ENCODE measurements at regions of chr2 and their contacts with region 1.

Region 1: DNA sequence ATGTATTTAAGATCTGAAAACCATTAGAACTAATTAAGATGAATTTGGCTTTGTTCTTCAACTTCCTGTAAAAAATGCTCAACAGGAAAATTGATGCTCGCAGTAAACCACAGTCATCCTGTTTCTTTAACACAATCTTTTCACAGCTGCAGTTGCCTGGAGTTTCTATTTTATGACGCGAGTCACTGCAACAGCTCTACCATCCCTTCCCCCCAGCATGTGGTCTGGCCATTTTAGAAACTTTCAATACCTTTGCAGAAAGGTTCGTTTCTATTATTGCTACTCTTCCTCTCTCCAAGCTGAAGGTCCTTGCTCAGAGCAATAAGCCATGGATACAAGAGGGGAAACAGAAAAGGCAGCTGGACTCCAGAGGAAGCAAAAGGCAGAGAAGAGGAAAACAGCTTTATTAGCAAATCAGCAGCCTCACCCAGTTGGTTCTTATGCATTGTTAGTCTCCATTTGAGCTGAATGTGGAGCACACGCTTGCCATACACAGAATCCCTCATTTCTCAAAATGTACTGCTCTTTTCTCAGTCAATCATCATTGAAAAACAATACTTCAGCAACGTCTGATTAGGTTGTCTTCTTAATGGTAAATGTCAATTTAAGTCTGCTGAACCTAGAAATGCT is 3.9 kb downstream of the WIPF1 start:
- DNase-seq: peak; percentile 34 to 95 (median 71)
- ATAC-seq: peak; percentile 67
- H3K4me3 ChIP-seq: peak overlapping the region; percentile 40 to 74
- H3K4me3 Mint-ChIP-seq: peak overlapping the region; percentile 87
- H3K27ac ChIP-seq: peak overlapping the region; percentile 65 to 91
- H3K27ac Mint-ChIP-seq: peak overlapping the region; percentile 99
- H3K4me1 ChIP-seq: peaks cover 46% of the 10 kb centered on the region
- H3K4me1 Mint-ChIP-seq: peaks cover 61% of the 10 kb centered on the region
- H3K27me3 ChIP-seq: no peaks in the 10 kb centered on the region
- H3K27me3 Mint-ChIP-seq: no peaks in the 10 kb centered on the region
- CTCF ChIP-seq: no peak

Region 2: DNA sequence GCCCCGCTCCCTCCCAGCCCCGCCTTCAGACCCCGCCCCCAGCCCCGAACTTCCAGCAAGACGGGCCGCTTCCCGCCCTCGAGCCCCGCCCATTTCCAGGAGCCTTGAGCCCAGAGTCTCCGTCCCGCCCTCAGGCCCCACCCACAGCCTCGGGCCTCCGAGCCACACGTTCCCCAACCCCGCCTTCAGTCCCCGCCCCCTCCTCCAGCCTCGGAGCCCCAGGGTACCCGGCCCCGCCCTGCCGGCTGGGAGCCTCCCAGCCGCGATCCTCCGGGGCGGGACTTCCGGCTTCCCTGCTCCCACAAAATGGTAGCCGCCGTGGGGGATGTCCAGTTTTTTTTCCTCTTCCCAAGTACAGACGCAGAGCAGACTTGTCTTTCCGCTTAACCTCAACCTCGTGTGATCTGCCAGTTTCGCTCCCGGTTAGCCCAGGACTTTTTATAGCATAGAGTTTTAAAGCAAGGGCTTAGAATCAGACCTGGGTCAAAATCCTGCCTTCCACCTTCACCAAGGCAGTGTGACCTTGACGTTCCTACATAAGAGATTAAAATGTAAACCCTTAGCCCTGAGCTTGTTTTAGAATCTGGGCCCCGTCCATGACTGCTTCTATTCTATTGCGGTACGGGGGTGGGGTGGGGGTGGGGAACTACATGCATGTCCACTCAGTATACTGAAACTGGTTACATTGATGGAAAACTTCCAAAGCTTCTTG is 106.4 kb before region 1 on chr2:
- CTCF ChIA-PET with region 1: interaction called, 9 read pairs
- POLR2A ChIA-PET with region 1: interaction called, 13 read pairs
- intact Hi-C with region 1: loop called (anchors 2 to 5 kb)
- DNase-seq: peak; percentile 77 to 98 (median 97)
- ATAC-seq: peak; percentile 74
- H3K4me3 ChIP-seq: peak overlapping the region; percentile 83 to 86
- H3K4me3 Mint-ChIP-seq: peak overlapping the region; percentile 97
- H3K27ac ChIP-seq: peak overlapping the region; percentile 69 to 85
- H3K27ac Mint-ChIP-seq: peak overlapping the region; percentile 88
- H3K4me1 ChIP-seq: peaks cover 59% of the 10 kb centered on the region
- H3K4me1 Mint-ChIP-seq: peaks cover 73% of the 10 kb centered on the region
- H3K27me3 ChIP-seq: no peaks in the 10 kb centered on the region
- H3K27me3 Mint-ChIP-seq: no peaks in the 10 kb centered on the region
- CTCF ChIP-seq: no peak

Region 3: GRCh38 chr2:174492963-174493431 is 100.7 kb before region 1 on chr2:
- CTCF ChIA-PET with region 1: interaction called, 9 read pairs
- POLR2A ChIA-PET with region 1: interaction called, 13 read pairs
- intact Hi-C with region 1: loop called in 1 of 2 experiments (anchors 5 kb)
- DNase-seq: peak; percentile 34 to 94 (median 64)
- ATAC-seq: peak; percentile 85
- H3K4me3 ChIP-seq: peak overlapping the region; percentile 27 to 47
- H3K4me3 Mint-ChIP-seq: peak overlapping the region; percentile 85
- H3K27ac ChIP-seq: peak overlapping the region; percentile 71 to 88
- H3K27ac Mint-ChIP-seq: peak overlapping the region; percentile 97
- H3K4me1 ChIP-seq: peaks cover 71% of the 10 kb centered on the region
- H3K4me1 Mint-ChIP-seq: peaks cover 83% of the 10 kb centered on the region
- H3K27me3 ChIP-seq: no peaks in the 10 kb centered on the region
- H3K27me3 Mint-ChIP-seq: no peaks in the 10 kb centered on the region
- CTCF ChIP-seq: no peak

Region 4: GRCh38 chr2:174546581-174547506 is 46.8 kb before region 1 on chr2:
- CTCF ChIA-PET with region 1: no interaction called
- POLR2A ChIA-PET with region 1: no interaction called
- intact Hi-C with region 1: no loop called
- DNase-seq: peak in 5 of 9 experiments; percentile 8 to 66 (median 46)
- ATAC-seq: peak; percentile 83
- H3K4me3 ChIP-seq: no peak overlapping the region
- H3K4me3 Mint-ChIP-seq: no peak overlapping the region
- H3K27ac ChIP-seq: no peak overlapping the region
- H3K27ac Mint-ChIP-seq: peak overlapping the region; percentile 73
- H3K4me1 ChIP-seq: peaks cover 4% of the 10 kb centered on the region
- H3K4me1 Mint-ChIP-seq: peaks cover 23% of the 10 kb centered on the region
- H3K27me3 ChIP-seq: no peaks in the 10 kb centered on the region
- H3K27me3 Mint-ChIP-seq: no peaks in the 10 kb centered on the region
- CTCF ChIP-seq: no peak

Region 5: DNA sequence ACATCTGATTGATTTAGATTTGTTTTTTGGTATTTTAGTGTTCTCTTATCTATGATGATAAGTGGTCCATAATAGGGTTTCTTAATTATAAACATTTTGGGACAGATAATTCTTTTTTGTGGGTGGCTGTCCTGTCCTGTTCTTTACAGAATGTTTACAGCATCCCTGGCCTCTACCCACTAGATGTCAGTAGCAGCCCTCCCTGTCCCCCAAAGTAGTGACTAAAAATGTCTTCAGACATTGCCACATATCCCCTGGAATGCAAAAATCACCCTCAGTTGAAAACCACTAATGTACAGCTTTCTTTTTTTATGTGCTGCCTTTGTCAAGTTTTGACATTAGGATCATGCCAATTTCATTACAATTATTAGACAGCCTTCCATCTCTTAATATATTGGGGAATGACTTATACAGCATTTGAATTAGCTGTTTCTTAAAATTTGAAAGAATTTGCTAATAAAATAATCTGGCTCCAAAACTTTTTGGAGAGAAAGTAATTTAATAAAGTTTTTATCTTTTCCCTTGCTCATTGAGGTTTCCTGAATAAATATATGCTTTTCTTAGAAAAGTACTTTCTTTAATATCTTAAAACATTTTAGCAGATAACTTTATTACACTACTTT is 15.6 kb before region 1 on chr2:
- CTCF ChIA-PET with region 1: interaction called, 289 read pairs
- POLR2A ChIA-PET with region 1: interaction called, 18 read pairs
- intact Hi-C with region 1: loop called in 1 of 2 experiments (anchors 1 kb)
- DNase-seq: peak in 6 of 9 experiments; percentile 33 to 87 (median 67)
- ATAC-seq: peak; percentile 84
- H3K4me3 ChIP-seq: no peak overlapping the region
- H3K4me3 Mint-ChIP-seq: no peak overlapping the region
- H3K27ac ChIP-seq: peak overlapping the region in 1 of 2 experiments; percentile 5
- H3K27ac Mint-ChIP-seq: peak overlapping the region; percentile 83
- H3K4me1 ChIP-seq: peaks cover 65% of the 10 kb centered on the region
- H3K4me1 Mint-ChIP-seq: peaks cover 80% of the 10 kb centered on the region
- H3K27me3 ChIP-seq: no peaks in the 10 kb centered on the region
- H3K27me3 Mint-ChIP-seq: no peaks in the 10 kb centered on the region
- CTCF ChIP-seq: peak; percentile 83

Region 6: DNA sequence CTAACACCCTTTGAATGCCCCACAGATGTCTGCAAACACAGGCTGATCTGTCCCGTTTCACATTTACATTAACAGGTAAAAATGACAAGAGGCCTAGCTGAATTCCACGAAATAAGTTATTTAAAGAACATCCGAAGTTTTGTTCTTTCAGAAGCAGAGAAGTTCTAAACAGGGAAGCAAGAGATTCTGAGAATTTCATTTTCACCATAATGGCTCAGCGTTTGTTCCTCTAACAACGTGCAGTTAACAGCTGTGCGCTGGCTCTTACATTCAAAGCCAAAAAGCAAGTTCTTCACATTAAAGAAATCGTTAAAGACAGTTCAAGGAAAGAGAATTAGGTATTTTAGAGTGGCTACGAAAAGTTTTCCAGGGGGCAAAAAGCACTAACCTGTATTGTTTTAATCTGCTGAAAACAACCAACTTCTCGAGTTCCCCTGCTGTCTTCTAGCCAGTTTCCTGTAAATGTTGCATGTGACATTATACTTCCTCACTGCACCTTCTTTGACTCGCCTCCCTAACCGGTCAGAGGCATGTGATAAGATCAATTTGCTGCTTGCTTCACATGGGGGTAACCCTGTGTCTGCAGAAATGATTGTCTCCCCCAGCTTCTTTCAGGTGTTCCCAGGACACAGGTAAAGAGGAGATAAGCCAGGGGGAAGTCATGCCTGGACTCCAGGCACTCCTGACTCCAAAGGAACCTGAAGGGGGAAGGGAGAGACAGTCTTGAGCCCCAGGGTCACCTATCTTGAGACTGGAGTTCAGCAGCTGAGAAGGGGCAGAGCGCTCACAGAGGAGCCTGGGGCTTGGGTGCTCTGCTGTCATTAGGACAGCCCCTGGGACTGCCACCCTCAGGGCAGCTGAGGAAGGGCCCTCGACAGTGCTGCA is 40.7 kb after region 1 on chr2:
- CTCF ChIA-PET with region 1: interaction called, 5 read pairs
- POLR2A ChIA-PET with region 1: interaction called, 14 read pairs
- intact Hi-C with region 1: loop called in 1 of 2 experiments (anchors 1 kb)
- DNase-seq: peak in 8 of 9 experiments; percentile 14 to 83 (median 51)
- ATAC-seq: peak; percentile 74
- H3K4me3 ChIP-seq: peak overlapping the region; percentile 70 to 71
- H3K4me3 Mint-ChIP-seq: peak overlapping the region; percentile 95
- H3K27ac ChIP-seq: peak overlapping the region; percentile 49 to 90
- H3K27ac Mint-ChIP-seq: peak overlapping the region; percentile 98
- H3K4me1 ChIP-seq: peaks cover 46% of the 10 kb centered on the region
- H3K4me1 Mint-ChIP-seq: peaks cover 71% of the 10 kb centered on the region
- H3K27me3 ChIP-seq: no peaks in the 10 kb centered on the region
- H3K27me3 Mint-ChIP-seq: no peaks in the 10 kb centered on the region
- CTCF ChIP-seq: no peak

Region 7: GRCh38 chr2:174644401-174644800 is 50.7 kb after region 1 on chr2:
- CTCF ChIA-PET with region 1: no interaction called
- POLR2A ChIA-PET with region 1: no interaction called
- intact Hi-C with region 1: no loop called
- DNase-seq: no peak
- ATAC-seq: no peak
- H3K4me3 ChIP-seq: no peak overlapping the region
- H3K4me3 Mint-ChIP-seq: no peak overlapping the region
- H3K27ac ChIP-seq: no peak overlapping the region
- H3K27ac Mint-ChIP-seq: no peak overlapping the region
- H3K4me1 ChIP-seq: no peaks in the 10 kb centered on the region
- H3K4me1 Mint-ChIP-seq: peaks cover 13% of the 10 kb centered on the region
- H3K27me3 ChIP-seq: no peaks in the 10 kb centered on the region
- H3K27me3 Mint-ChIP-seq: no peaks in the 10 kb centered on the region
- CTCF ChIP-seq: no peak

Region 8: DNA sequence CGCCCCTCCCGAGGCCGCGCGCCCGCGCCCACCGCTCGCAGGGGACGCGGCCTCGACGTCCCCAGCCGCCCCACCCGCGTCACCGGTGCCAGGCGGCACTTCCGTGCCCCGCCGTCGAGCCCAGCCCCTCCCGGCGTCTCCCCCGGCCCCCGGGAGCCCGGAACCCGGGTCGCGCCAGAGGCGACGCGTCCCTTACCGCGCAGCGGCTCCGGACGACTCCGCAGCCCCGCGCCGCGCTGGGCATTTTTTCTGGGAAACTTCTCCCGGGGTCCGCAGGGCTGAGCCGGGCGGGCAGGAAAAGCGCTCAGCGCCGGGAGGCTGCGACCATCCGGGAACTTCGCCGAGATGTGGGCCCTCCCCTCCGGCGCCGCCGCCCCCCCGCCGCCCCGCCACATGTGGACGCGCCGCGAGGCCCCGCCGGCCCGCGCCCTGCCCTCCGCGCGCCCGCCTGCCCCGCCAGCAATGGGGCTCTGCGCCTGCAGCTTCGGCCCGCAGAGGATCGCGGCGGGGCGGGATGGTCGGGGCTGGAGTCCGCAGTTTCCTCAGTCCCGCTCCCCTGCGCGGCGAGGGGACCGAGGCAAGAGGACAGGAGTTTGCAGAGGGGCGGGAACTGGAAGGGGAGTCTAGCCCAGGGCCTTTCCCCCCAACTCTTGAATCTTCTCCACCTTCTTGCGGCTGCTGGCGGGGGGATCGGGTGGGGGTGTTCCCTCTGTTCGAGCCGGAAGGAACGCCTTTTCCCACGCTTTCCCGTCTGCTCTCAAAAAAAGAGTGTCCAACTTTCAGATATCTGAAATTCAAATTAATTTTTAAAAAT is 89.1 kb after region 1 on chr2:
- CTCF ChIA-PET with region 1: interaction called, 60 read pairs
- POLR2A ChIA-PET with region 1: interaction called, 8 read pairs
- intact Hi-C with region 1: loop called in 1 of 2 experiments (anchors 5 kb)
- DNase-seq: peak; percentile 33 to 83 (median 67)
- ATAC-seq: peak; percentile 74
- H3K4me3 ChIP-seq: peak overlapping the region; percentile 73 to 81
- H3K4me3 Mint-ChIP-seq: peak overlapping the region; percentile 91
- H3K27ac ChIP-seq: peak overlapping the region; percentile 41 to 70
- H3K27ac Mint-ChIP-seq: peak overlapping the region; percentile 93
- H3K4me1 ChIP-seq: peaks cover 35% of the 10 kb centered on the region
- H3K4me1 Mint-ChIP-seq: peaks cover 55% of the 10 kb centered on the region
- H3K27me3 ChIP-seq: no peaks in the 10 kb centered on the region
- H3K27me3 Mint-ChIP-seq: no peaks in the 10 kb centered on the region
- CTCF ChIP-seq: no peak

Region 9: GRCh38 chr2:174771631-174772471 is 178.2 kb after region 1 on chr2:
- CTCF ChIA-PET with region 1: no interaction called
- POLR2A ChIA-PET with region 1: interaction called, 8 read pairs
- intact Hi-C with region 1: loop called in 1 of 2 experiments (anchors 10 kb)
- DNase-seq: peak in 6 of 9 experiments; percentile 23 to 68 (median 51)
- ATAC-seq: peak; percentile 60
- H3K4me3 ChIP-seq: no peak overlapping the region
- H3K4me3 Mint-ChIP-seq: no peak overlapping the region
- H3K27ac ChIP-seq: no peak overlapping the region
- H3K27ac Mint-ChIP-seq: peak overlapping the region; percentile 3
- H3K4me1 ChIP-seq: peaks cover 14% of the 10 kb centered on the region
- H3K4me1 Mint-ChIP-seq: peaks cover 21% of the 10 kb centered on the region
- H3K27me3 ChIP-seq: no peaks in the 10 kb centered on the region
- H3K27me3 Mint-ChIP-seq: no peaks in the 10 kb centered on the region
- CTCF ChIP-seq: no peak

Region 10: GRCh38 chr2:174815526-174815925 is 221.8 kb after region 1 on chr2:
- CTCF ChIA-PET with region 1: no interaction called
- POLR2A ChIA-PET with region 1: no interaction called
- intact Hi-C with region 1: no loop called
- DNase-seq: no peak
- ATAC-seq: no peak
- H3K4me3 ChIP-seq: no peak overlapping the region
- H3K4me3 Mint-ChIP-seq: no peak overlapping the region
- H3K27ac ChIP-seq: no peak overlapping the region
- H3K27ac Mint-ChIP-seq: no peak overlapping the region
- H3K4me1 ChIP-seq: no peaks in the 10 kb centered on the region
- H3K4me1 Mint-ChIP-seq: no peaks in the 10 kb centered on the region
- H3K27me3 ChIP-seq: no peaks in the 10 kb centered on the region
- H3K27me3 Mint-ChIP-seq: no peaks in the 10 kb centered on the region
- CTCF ChIP-seq: no peak

Region 11: GRCh38 chr2:175476948-175477347 is 883.3 kb after region 1 on chr2:
- CTCF ChIA-PET with region 1: no interaction called
- POLR2A ChIA-PET with region 1: no interaction called
- intact Hi-C with region 1: no loop called
- DNase-seq: no peak
- ATAC-seq: no peak
- H3K4me3 ChIP-seq: no peak overlapping the region
- H3K4me3 Mint-ChIP-seq: no peak overlapping the region
- H3K27ac ChIP-seq: no peak overlapping the region
- H3K27ac Mint-ChIP-seq: no peak overlapping the region
- H3K4me1 ChIP-seq: no peaks in the 10 kb centered on the region
- H3K4me1 Mint-ChIP-seq: no peaks in the 10 kb centered on the region
- H3K27me3 ChIP-seq: no peaks in the 10 kb centered on the region
- H3K27me3 Mint-ChIP-seq: no peaks in the 10 kb centered on the region
- CTCF ChIP-seq: no peak

Measured in CD8-positive, alpha-beta T cell (primary cell).